ENCODE measurements at regions of chr1 and their contacts with region 1.

Region 1: DNA sequence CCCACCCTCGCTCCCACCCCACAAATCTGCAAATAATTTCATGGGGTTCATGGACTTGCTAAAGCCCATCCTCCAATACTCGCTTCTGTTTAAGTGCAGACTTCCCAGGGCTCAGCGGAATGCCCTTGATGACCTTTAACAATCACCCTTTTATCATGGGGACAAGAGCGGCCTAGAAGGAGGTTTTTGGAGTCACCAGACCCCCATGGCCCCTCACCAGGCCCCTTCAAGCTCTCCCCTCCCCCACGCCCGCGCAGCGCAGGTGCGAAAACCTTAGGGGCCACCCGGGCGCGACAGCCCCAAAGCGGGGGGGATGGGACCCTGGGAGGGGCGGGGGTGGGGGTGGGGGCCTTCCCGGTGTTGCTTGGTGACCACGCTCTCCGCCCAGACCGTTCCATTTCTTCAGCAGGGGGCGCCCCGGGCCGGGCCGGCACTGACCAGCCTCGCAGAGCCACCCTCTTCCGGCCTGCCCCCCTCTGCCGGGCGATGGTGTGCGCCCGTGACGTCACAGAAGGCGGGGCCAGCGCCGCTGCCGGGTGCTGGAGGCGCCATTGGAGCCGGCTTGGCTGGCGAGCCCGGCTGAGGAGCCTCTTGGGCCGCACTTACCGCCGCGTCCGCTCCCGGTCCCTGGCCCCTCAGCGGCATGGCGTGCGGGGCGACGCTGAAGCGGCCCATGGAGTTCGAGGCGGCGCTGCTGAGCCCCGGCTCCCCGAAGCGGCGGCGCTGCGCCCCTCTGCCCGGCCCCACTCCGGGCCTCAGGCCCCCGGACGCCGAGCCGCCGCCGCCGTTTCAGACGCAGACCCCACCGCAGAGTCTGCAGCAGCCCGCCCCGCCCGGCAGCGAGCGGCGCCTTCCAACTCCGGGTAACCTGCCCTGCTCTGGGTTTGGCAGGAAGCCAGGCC is at the start of gene AKIRIN1:
- DNase-seq: peak; percentile 98
- ATAC-seq: peak; percentile 91
- H3K4me3 Mint-ChIP-seq: peak within 1 kb of the TSS; percentile 87
- H3K27ac Mint-ChIP-seq: peak within 1 kb of the TSS; percentile 88
- H3K4me1 Mint-ChIP-seq: peaks cover 55% of the 10 kb centered on the region
- H3K27me3 Mint-ChIP-seq: no peaks in the 10 kb centered on the region
- total RNA-seq, gene AKIRIN1: 65.7 to 86.0 TPM

Region 2: DNA sequence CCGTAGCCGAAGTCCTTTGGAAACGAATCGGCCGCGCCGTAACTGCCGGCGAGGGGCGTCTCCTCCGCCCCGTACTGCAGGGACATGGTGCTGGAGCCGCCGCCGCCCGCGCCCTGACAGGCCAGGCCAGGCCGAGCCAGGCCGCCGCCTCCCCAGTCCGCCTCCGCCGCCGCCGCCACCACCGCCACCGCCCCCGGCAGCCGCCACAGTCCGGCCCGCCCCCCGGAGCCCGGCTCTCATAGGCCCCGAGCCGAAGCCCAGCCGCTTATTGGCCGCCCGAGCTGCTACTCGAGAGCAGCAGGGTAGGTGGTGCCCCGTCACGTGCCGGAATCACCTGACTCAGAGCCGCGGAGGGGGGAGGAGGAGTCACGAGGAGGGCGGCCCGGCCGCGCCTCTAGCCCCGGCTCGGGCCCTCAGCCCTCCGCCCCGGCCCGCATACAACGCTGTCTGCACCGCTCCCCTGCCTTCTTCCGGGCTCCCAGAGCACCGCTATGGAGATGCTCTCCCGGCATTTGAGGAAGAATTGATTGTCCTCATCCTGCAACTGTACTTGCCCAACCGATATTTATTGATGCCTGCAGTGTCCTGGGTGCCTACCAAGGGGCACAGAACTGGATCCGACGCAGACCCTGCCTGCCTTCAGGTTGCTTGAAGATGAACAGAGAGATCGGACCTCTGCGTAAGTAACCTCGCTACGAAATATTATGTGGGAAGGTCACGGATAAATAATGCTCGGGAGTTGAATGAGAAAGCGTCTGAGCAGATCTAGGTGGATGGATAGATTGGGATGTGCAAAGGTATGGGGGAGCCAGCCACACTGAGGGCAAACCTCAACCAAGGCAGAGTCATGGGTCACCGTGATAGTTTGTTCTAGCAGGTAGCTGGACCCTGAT is 131.2 kb before region 1 on chr1 and contains the start of gene RRAGC:
- CTCF ChIA-PET with region 1: interaction called, 3 read pairs
- POLR2A ChIA-PET with region 1: interaction called, 6 read pairs
- intact Hi-C with region 1: loop called (anchors 1 to 5 kb)
- DNase-seq: peak; percentile 99
- ATAC-seq: peak; percentile 98
- H3K4me3 Mint-ChIP-seq: peak within 1 kb of the TSS; percentile 98
- H3K27ac Mint-ChIP-seq: peak within 1 kb of the TSS; percentile 91
- H3K4me1 Mint-ChIP-seq: peaks cover 58% of the 10 kb centered on the region
- H3K27me3 Mint-ChIP-seq: no peaks in the 10 kb centered on the region
- total RNA-seq, gene RRAGC: 15.8 to 19.0 TPM

Region 3: GRCh38 chr1:38873027-38873969 is 117.7 kb before region 1 on chr1 and contains the start of gene MYCBP:
- CTCF ChIA-PET with region 1: no interaction called
- POLR2A ChIA-PET with region 1: no interaction called
- intact Hi-C with region 1: loop called (anchors 1 to 5 kb)
- DNase-seq: peak; percentile 97
- ATAC-seq: peak; percentile 99
- H3K4me3 Mint-ChIP-seq: peak within 1 kb of the TSS; percentile 92
- H3K27ac Mint-ChIP-seq: peak within 1 kb of the TSS; percentile 83
- H3K4me1 Mint-ChIP-seq: peaks cover 26% of the 10 kb centered on the region
- H3K27me3 Mint-ChIP-seq: no peaks in the 10 kb centered on the region
- total RNA-seq, gene MYCBP: 44.4 to 46.8 TPM

Region 4: GRCh38 chr1:39003794-39004193 is 12.8 kb after region 1 on chr1:
- CTCF ChIA-PET with region 1: interaction called, 5 read pairs
- POLR2A ChIA-PET with region 1: no interaction called
- intact Hi-C with region 1: loop called in 1 of 2 experiments (anchors 1 kb)
- DNase-seq: no peak
- ATAC-seq: peak; percentile 69
- H3K4me3 Mint-ChIP-seq: no peak overlapping the region
- H3K27ac Mint-ChIP-seq: peak overlapping the region; percentile 57
- H3K4me1 Mint-ChIP-seq: peaks cover 44% of the 10 kb centered on the region
- H3K27me3 Mint-ChIP-seq: no peaks in the 10 kb centered on the region

Region 5: GRCh38 chr1:39081266-39082009 is 90.4 kb after region 1 on chr1:
- CTCF ChIA-PET with region 1: no interaction called
- POLR2A ChIA-PET with region 1: no interaction called
- intact Hi-C with region 1: loop called in 1 of 2 experiments (anchors 10 kb)
- DNase-seq: peak; percentile 45
- ATAC-seq: peak; percentile 61
- H3K4me3 Mint-ChIP-seq: no peak overlapping the region
- H3K27ac Mint-ChIP-seq: no peak overlapping the region
- H3K4me1 Mint-ChIP-seq: peaks cover 8% of the 10 kb centered on the region
- H3K27me3 Mint-ChIP-seq: peaks cover 32% of the 10 kb centered on the region

Region 6: DNA sequence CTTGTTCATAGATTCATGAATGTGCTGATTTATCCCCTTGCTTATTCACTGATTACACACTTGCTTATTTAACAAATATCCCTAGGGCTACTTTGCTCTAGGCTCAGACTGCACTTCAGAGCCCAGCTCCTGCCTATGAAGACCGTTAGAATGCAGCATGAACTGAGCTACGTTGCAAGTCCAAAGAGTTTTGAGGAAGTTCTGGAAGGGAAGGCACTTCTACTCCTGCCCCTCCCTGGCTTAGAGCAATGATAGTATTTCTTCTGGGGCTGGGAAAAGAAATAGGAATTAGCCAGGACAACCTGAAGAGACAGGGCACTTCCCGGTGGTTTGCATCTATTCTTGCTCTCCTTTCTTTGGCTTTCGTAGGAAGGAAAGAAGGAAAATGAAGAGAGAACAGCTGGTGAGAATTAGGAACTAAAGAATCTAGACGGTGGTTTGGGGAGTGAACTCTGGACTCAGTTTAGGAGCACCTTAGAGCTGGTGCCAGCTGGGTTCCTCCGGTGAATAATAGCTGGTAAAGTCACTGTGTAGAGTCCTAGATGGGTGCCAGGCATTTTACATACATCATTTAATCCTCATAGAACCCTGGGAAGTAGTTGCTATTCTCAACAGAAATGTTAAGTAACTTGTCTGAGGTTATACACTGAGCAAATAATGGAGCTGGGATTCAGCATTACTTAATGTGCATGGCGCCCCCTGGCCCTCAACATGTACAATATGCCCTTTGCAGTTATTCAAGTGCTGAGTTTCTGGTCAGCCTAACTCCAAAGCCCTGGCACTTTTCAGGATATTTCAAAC is 101.1 kb after region 1 on chr1:
- CTCF ChIA-PET with region 1: no interaction called
- POLR2A ChIA-PET with region 1: no interaction called
- intact Hi-C with region 1: loop called (anchors 5 to 10 kb)
- DNase-seq: peak; percentile 82
- ATAC-seq: peak; percentile 81
- H3K4me3 Mint-ChIP-seq: no peak overlapping the region
- H3K27ac Mint-ChIP-seq: no peak overlapping the region
- H3K4me1 Mint-ChIP-seq: peaks cover 3% of the 10 kb centered on the region
- H3K27me3 Mint-ChIP-seq: no peaks in the 10 kb centered on the region

Region 7: DNA sequence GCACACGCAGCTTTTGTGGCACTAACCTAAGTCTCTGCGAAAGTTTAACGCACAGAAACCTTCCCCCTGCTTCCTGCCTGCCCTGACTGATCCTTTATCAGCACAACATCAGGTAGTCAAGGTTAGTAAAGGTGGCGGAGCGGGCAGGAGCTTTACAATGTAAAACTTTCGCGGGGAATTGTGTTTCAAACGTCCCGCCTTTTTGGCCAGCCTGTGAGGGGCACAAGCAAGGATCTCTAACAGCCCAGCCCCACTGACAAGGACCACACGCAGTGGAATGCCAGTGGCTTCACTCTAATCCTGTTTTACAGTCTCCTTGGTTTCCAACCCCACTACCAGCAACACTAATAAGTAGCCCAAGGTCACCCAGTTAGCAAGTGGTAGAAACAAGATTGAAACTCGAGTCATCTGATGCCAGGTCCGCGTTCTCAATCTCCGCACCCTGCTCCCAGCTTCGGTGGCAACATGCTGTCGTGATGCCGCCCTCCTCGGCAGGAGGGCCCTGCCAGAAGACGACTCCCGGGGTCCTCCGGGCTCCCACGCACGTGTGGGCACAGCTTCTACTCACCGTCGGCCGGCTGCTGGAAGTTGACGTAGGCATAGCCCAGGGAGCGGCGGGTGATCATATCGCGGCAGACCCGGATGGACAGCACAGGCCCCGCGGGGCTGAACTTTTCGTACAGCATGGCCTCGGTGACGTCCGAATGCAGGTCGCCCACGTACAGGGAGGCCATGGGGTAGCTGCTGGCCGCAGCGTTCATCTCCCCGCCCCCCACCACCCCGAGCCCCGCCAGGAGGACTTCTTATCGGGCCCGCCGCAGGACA is 584.4 kb after region 1 on chr1:
- CTCF ChIA-PET with region 1: no interaction called
- POLR2A ChIA-PET with region 1: no interaction called
- intact Hi-C with region 1: loop called in 1 of 2 experiments (anchors 5 kb)
- DNase-seq: peak; percentile 69
- ATAC-seq: peak; percentile 40
- H3K4me3 Mint-ChIP-seq: peak overlapping the region; percentile 90
- H3K27ac Mint-ChIP-seq: peak overlapping the region; percentile 90
- H3K4me1 Mint-ChIP-seq: peaks cover 42% of the 10 kb centered on the region
- H3K27me3 Mint-ChIP-seq: no peaks in the 10 kb centered on the region

Measured in activated CD4-positive, alpha-beta T cell treated with anti-CD3 and anti-CD28 coated beads for 36 hours (primary cell).